Posterior vena cava (tissue), 2 donors: ENCODE measurements at regions of chrX and their contacts with region 1.

Region 1: DNA sequence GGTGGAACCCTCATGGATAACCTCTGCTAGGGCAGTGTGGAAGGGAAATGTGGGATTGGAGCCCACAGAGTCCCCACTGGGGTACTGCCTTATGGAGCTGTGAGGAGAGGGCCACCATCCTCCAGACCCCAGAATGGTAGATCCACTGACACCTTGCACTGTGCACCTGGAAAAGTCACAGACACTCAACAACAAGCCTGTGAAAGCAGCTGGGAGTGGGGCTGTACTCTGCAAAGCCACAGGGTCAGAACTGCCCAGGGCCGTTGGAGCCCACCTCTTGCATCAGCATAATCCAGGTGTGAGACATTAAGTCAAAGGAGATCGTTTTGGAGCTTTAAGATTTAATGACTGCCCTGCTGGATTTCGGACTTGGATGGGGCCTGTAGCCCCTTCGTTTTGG is 11.6 kb downstream of the ARMCX5 start:
- DNase-seq: no peak

Region 2: GRCh38 chrX:102899940-102900916 is 289.3 kb after region 1 on chrX:
- intact Hi-C with region 1: loop called in 1 of 2 experiments (anchors 10 kb)
- DNase-seq: no peak